IMR-90 (cell line): ENCODE measurements at regions of chr6 and their contacts with region 1.

Region 1: GRCh38 chr6:159862103-159862502 is 28.7 kb upstream of the MAS1 start:
- DNase-seq: no peak
- ATAC-seq: no peak
- H3K4me3 ChIP-seq: no peak overlapping the region
- H3K27ac ChIP-seq: no peak overlapping the region
- H3K4me1 ChIP-seq: no peaks in the 10 kb centered on the region
- H3K27me3 ChIP-seq: peaks cover 2% of the 10 kb centered on the region
- CTCF ChIP-seq: no peak
- POLR2A ChIP-seq: no peak
- RAD21 ChIP-seq: no peak

Region 2: DNA sequence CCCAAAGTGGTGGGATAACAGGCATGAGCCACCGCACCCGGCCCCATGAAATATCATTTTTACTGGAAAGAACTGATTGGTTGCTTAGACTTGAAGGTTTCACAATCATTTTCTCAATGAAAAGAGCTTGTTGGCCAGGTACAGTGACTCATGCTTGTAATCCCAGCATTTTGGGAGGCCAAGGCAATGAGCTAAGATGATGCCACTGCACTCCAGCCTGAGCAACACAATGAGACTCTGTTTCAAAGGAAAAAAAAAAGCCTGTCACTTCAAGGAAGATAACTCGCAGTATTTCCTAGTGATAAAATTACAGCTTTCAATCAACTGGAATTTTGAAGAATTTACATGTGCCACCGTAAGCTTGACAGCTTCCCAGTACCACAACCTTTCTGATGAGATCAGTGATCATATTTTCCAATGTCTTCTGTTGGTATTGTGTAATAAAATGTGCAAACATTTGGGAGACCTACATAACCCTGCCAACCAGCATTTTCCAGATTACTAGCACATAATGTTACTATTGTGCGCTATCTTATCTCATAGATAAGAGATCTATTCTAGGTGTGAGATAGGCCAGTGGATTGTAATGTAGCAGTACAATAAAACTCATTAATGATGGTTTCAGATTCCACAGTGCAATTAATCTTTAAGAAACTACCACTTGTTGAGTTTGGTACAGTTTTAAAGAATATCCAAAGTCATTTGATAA is 54.8 kb before region 1 on chr6:
- CTCF ChIA-PET with region 1: no interaction called
- POLR2A ChIA-PET with region 1: no interaction called
- dilution Hi-C with region 1: no loop called
- in situ Hi-C with region 1: no loop called
- intact Hi-C with region 1: no loop called
- DNase-seq: no peak
- ATAC-seq: no peak
- H3K4me3 ChIP-seq: no peak overlapping the region
- H3K27ac ChIP-seq: no peak overlapping the region
- H3K4me1 ChIP-seq: no peaks in the 10 kb centered on the region
- H3K27me3 ChIP-seq: no peaks in the 10 kb centered on the region
- CTCF ChIP-seq: no peak
- POLR2A ChIP-seq: no peak
- RAD21 ChIP-seq: no peak

Region 3: DNA sequence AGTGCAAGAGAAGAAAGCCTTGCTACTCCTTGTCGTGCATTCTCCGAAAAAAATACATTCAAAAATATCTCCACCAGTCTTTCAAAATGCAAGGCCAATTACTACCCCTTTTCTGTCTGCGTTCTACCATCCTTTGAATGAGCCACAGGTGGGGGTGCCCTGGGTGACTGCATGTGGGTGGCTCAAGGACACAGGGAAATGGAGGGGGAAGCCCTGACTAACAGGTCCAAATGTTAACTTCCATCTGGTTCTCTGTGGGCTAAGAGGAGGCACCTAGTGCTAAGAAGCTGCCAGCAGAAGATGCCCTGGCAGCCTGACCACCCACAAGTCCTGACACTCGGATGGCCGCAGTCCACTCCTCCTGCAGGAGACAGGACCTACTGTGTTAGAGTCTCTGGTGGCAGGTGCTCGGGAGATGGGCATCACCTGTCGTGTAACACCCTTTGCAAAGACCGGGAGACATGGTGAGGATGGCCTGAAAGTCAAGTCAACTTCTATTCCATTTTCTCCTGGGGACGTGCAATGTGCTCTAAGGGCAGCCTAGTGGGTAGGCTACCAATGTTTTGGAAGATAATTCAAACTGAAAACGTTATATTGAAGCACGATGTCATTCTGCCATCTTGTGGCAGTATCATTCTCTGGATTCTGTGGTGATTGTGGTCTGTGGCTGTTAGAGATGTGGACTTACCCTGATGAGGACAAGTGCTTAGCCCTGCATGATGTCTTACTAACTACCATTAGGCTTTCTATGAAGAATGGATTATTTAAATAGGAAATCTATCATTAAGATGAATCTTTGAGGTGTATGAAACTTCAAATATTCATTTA is 79.4 kb after region 1 on chr6:
- CTCF ChIA-PET with region 1: interaction called, 7 read pairs
- POLR2A ChIA-PET with region 1: no interaction called
- dilution Hi-C with region 1: no loop called
- in situ Hi-C with region 1: no loop called
- intact Hi-C with region 1: loop called (anchors 1 kb)
- DNase-seq: peak; percentile 57
- ATAC-seq: peak; percentile 85
- H3K4me3 ChIP-seq: no peak overlapping the region
- H3K27ac ChIP-seq: no peak overlapping the region
- H3K4me1 ChIP-seq: peaks cover 2% of the 10 kb centered on the region; the same call in 1 of the 2 replicates
- H3K27me3 ChIP-seq: peaks cover 3% of the 10 kb centered on the region; the same call in 1 of the 2 replicates
- CTCF ChIP-seq: peak; percentile 68
- POLR2A ChIP-seq: no peak
- RAD21 ChIP-seq: peak; percentile 85

Region 4: GRCh38 chr6:160030103-160030502 is 168.0 kb after region 1 on chr6:
- CTCF ChIA-PET with region 1: no interaction called
- POLR2A ChIA-PET with region 1: no interaction called
- dilution Hi-C with region 1: no loop called
- in situ Hi-C with region 1: no loop called
- intact Hi-C with region 1: loop called (anchors 1 kb)
- DNase-seq: peak; percentile 97
- ATAC-seq: peak; percentile 92
- H3K4me3 ChIP-seq: no peak overlapping the region
- H3K27ac ChIP-seq: peak overlapping the region; percentile 43; the same call in 1 of the 2 replicates
- H3K4me1 ChIP-seq: peaks cover 6% of the 10 kb centered on the region
- H3K27me3 ChIP-seq: no peaks in the 10 kb centered on the region
- CTCF ChIP-seq: no peak
- POLR2A ChIP-seq: no peak
- RAD21 ChIP-seq: peak; percentile 24; the same call in 1 of the 2 replicates

Region 5: DNA sequence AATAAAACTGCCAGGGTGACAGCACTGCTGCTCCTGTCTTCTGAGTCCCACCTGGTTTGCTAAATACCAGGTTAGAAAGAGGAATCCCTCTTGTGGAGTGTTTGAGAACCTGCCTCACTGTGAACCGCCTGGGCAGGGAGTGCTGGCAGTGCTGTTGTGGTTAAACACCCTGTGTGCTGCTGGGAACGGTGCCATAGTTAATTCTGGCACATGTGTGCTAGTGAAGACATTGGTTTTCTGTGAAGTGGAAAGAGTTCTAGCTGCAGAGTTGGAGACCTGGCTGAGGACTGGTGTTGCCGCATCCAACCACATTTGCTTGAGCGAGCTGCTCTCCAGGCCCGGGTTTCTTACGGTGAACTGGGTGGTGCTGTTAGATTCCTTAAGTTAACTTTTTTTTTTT is 179.5 kb after region 1 on chr6:
- CTCF ChIA-PET with region 1: no interaction called
- POLR2A ChIA-PET with region 1: no interaction called
- dilution Hi-C with region 1: no loop called
- in situ Hi-C with region 1: loop called (anchors 10 kb)
- intact Hi-C with region 1: no loop called
- DNase-seq: peak; percentile 70
- ATAC-seq: peak; percentile 32
- H3K4me3 ChIP-seq: no peak overlapping the region
- H3K27ac ChIP-seq: no peak overlapping the region
- H3K4me1 ChIP-seq: peaks cover 5% of the 10 kb centered on the region
- H3K27me3 ChIP-seq: no peaks in the 10 kb centered on the region
- CTCF ChIP-seq: 0 out of 2 replicates have a peak, but pooled peaks have one; percentile 19
- POLR2A ChIP-seq: no peak
- RAD21 ChIP-seq: 0 out of 2 replicates have a peak, but pooled peaks have one; percentile 19

Region 6: DNA sequence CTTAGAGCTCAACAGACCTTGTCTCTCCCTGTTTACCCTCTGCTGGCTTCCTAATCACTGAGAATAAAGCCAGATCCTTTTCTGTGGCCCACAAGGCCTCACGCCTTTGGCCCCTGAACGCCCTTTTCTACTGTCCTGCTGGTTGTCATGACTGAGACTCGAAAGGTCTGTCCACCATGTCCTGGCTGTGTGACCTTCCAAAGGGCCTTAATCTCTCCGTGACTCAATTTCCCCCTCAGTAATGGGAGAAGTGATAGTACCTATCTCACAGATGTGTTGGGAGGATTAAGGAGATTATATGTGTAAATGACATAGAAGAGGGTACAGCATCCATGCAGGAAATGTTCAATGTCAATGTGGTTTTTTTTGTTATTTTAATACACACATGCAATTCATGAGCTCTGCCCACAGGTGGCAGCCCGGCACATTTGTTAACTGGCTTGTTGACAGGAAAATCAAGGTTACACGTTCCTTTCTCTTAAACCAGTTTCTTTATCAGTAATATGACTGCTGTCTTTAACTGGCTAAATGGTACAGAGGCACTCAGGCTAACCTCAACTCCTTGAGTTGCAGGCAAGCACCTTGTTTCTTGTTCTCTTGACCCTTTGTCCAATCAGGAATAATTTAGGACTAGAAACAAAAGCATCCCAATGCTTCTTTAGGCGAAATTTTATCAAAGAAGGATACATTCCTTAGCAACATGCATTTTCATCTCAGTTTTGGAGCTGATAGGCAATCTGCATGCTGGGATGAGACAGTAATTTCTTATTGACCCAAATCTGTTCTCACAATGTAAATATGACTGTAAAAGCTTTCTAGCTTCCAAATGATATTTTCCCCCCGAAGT is 276.1 kb after region 1 on chr6:
- CTCF ChIA-PET with region 1: no interaction called
- POLR2A ChIA-PET with region 1: no interaction called
- dilution Hi-C with region 1: no loop called
- in situ Hi-C with region 1: no loop called
- intact Hi-C with region 1: loop called (anchors 2 kb)
- DNase-seq: peak; percentile 72
- ATAC-seq: peak; percentile 46
- H3K4me3 ChIP-seq: no peak overlapping the region
- H3K27ac ChIP-seq: no peak overlapping the region; the same call in 1 of the 2 replicates
- H3K4me1 ChIP-seq: peaks cover 12% of the 10 kb centered on the region
- H3K27me3 ChIP-seq: no peaks in the 10 kb centered on the region
- CTCF ChIP-seq: peak; percentile 76
- POLR2A ChIP-seq: no peak
- RAD21 ChIP-seq: peak; percentile 71

Region 7: DNA sequence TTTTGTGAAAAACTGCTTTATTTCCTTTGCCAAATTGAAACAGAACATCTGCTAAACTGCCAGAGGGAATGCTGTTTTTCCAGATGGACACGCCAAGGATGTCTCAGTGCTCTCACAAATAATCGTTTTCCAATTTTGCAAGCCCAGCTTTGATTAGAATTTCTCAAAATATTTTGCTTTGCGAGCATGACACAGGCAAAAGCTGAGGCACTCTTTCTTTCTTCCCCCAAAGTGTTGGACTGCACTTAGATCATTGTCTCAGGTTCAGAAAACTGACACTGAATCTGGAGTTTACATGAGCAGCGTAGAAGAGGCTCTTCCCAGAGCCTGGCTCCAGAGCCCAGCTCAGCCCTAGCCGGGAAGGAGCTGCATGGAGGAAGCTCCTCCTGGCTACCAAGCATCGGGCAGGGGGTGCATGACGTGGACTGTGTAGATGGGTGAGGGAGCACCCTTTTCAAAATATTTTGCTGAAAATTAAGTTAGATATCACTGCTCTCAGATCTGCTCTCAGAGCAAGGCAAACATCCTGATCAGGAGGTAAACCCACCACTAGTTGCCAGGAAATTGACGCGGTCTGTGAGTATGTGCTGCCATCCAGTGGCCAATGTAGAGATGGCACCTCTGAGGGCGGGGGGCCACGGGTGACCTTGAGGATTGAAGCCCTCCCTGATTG is 593.6 kb after region 1 on chr6:
- CTCF ChIA-PET with region 1: interaction called, 3 read pairs
- POLR2A ChIA-PET with region 1: no interaction called
- dilution Hi-C with region 1: no loop called
- in situ Hi-C with region 1: loop called (anchors 25 kb)
- intact Hi-C with region 1: loop called (anchors 1 kb)
- DNase-seq: peak; percentile 47
- ATAC-seq: peak; percentile 97
- H3K4me3 ChIP-seq: no peak overlapping the region; the same call in 1 of the 2 replicates
- H3K27ac ChIP-seq: peak overlapping the region; percentile 15; the same call in 1 of the 2 replicates
- H3K4me1 ChIP-seq: no peaks in the 10 kb centered on the region
- H3K27me3 ChIP-seq: no peaks in the 10 kb centered on the region
- CTCF ChIP-seq: peak; percentile 93
- POLR2A ChIP-seq: peak; percentile 55; the same call in 1 of the 2 replicates
- RAD21 ChIP-seq: peak; percentile 94